ENCODE measurements at regions of chr1 and their contacts with region 1.

Region 1: GRCh38 chr1:115098979-115099692 is 9.8 kb upstream of the TSPAN2 start:
- DNase-seq: peak; percentile 43
- H3K4me3 Mint-ChIP-seq: peak overlapping the region; percentile 82
- H3K27ac Mint-ChIP-seq: peak overlapping the region; percentile 98
- H3K4me1 Mint-ChIP-seq: peaks cover 21% of the 10 kb centered on the region
- H3K27me3 Mint-ChIP-seq: no peaks in the 10 kb centered on the region
- CTCF ChIP-seq: no peak

Region 2: DNA sequence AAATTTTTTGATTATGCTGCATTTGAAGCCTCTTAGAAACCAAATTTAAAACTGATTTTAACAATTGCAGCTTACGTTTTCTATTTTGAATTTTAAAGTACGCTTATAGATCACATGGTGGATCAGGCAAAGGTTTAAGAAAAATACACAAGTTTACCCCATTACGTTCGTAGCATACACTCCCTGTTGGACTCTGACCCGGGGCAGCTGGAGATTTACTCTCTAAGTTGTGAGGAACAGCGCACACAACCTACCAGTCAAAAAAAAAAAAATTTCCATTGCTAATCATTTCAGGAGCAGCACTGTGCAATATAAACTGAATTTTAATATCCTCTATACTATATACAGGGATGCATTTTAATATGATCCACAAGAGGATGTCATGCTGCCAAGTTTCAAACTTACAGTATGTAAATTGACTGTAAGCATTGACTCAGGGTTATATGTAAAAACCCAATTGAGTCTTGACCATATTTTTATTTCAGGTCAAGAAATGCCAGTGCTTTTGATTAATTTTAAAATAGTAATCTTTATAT is 361.8 kb before region 1 on chr1:
- CTCF ChIA-PET with region 1: no interaction called
- intact Hi-C with region 1: no loop called
- DNase-seq: no peak
- H3K4me3 Mint-ChIP-seq: no peak overlapping the region
- H3K27ac Mint-ChIP-seq: no peak overlapping the region
- H3K4me1 Mint-ChIP-seq: peaks cover 10% of the 10 kb centered on the region
- H3K27me3 Mint-ChIP-seq: no peaks in the 10 kb centered on the region
- CTCF ChIP-seq: no peak

Region 3: DNA sequence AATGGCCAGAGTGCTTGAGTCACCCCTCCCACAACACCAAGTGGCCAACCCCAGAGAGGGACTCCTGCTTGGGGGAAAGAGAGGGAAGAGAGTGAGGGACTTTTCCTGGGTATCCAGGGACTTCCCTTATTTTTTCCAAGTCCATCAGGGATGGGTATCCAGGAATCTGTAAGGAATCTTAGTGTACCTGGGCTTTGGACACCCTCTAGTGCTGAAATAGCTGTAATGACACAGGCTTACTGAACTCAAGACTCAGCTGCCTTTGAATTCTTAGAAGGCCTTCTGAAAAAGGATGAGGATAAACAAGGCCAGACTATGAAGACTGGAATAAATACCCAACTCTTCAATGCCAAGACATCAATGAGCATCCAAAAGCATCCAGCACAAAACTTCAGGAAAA is 57.5 kb before region 1 on chr1:
- CTCF ChIA-PET with region 1: no interaction called
- intact Hi-C with region 1: loop called (anchors 10 kb)
- DNase-seq: no peak
- H3K4me3 Mint-ChIP-seq: no peak overlapping the region
- H3K27ac Mint-ChIP-seq: no peak overlapping the region
- H3K4me1 Mint-ChIP-seq: no peaks in the 10 kb centered on the region
- H3K27me3 Mint-ChIP-seq: no peaks in the 10 kb centered on the region
- CTCF ChIP-seq: no peak

Region 4: DNA sequence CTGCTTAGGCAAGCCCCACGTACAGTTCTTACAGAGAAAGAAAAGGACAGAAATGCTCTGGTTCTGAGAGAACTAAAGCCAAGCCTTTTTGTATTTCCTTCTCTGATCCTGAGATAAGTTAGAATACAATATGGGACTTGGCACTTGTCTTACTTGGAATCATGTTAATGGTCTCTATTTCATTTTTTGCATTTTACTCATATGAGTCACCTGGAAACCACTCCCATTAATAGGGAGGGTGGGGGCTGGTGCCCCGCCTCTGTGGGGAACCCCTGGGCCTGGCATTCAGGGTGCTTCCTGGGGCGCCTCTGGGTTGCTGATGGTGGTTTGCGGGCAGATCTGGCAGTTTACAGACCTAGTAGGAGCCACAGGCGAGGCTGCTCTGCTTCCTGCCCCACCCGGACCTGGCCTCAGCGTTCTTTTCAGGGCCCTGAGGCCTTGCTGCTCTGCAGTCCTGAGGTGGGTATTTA is 36.6 kb before region 1 on chr1:
- CTCF ChIA-PET with region 1: no interaction called
- intact Hi-C with region 1: loop called (anchors 5 kb)
- DNase-seq: peak; percentile 83
- H3K4me3 Mint-ChIP-seq: peak overlapping the region; percentile 32
- H3K27ac Mint-ChIP-seq: peak overlapping the region; percentile 75
- H3K4me1 Mint-ChIP-seq: peaks cover 14% of the 10 kb centered on the region
- H3K27me3 Mint-ChIP-seq: no peaks in the 10 kb centered on the region
- CTCF ChIP-seq: no peak

Measured in Calu3 (cell line).